Dendritic cell treated with granulocyte-macrophage colony-stimulating factor and Interleukin-4, amounts not matched to agents 40 ng/mL and 50 ng/mL, for 4 days (primary cell): ENCODE measurements at regions of chr15 and their contacts with region 1.

Region 1: DNA sequence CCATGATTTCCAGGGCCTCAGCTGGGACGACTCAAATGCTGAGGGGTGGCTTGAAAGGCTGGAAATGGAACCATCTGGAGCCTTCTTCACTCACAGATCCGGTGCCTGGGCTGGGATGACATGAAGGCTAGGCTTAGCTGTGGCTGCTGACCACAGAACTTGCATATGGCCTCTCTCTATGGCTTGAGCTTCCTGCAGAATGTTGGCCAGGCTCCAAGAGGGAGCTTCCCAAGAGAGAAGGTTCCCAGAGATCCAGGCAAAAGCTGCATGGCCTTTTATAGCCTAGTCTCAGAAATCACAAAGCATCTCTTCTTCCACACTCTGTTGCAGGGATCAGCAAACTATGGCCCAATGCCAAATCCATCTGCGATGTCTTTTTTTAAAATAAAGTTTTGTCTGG is 44.8 kb downstream of the GATM start:
- H3K4me3 Mint-ChIP-seq: no peak overlapping the region
- H3K27ac Mint-ChIP-seq: peak overlapping the region; percentile 45
- H3K4me1 Mint-ChIP-seq: peaks cover 12% of the 10 kb centered on the region
- H3K27me3 Mint-ChIP-seq: peaks cover 2% of the 10 kb centered on the region

Region 2: DNA sequence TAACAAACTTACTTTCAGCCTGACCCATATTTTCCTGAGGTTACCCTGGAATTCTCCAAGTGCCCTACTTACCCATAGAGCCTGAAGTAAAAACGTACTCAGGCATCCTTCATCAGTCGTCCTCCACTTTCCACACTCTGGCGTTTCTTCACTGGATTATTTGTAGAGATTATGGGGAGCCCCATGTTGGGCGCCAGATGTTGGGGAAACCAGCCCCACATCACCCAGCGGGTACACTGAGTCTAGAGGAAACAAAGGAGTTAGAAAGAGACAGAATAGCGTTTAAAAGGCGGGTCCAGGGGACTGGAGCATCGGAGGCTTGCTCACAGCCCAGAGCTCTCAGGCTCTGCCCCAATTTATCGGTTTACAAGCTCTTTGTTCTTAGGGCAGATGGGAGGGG is 91.3 kb before region 1 on chr15:
- intact Hi-C with region 1: no loop called
- H3K4me3 Mint-ChIP-seq: no peak overlapping the region
- H3K27ac Mint-ChIP-seq: no peak overlapping the region
- H3K4me1 Mint-ChIP-seq: no peaks in the 10 kb centered on the region
- H3K27me3 Mint-ChIP-seq: no peaks in the 10 kb centered on the region

Region 3: DNA sequence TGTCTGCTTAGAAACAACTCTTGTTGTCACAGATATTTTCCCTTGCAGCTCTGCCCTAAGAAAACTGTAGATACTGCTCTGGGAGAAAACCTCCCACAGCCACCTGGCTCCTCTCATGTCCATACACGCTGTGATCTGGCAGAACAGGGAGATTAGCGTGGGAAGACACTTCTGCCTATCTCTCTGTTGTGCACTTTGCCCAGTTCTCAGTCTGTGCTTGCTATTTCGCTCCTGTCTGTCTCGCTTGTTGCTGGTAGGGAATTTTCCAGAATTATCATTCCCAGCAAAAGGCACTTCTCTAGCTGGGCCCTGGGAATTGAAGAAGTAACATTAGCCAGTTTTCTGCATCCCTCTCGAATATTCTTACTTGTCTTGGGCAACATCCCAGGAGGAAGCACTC is 52.9 kb after region 1 on chr15:
- intact Hi-C with region 1: loop called (anchors 10 kb)
- H3K4me3 Mint-ChIP-seq: no peak overlapping the region
- H3K27ac Mint-ChIP-seq: no peak overlapping the region
- H3K4me1 Mint-ChIP-seq: peaks cover 31% of the 10 kb centered on the region
- H3K27me3 Mint-ChIP-seq: peaks cover 16% of the 10 kb centered on the region